ENCODE measurements at regions of chr13 and their contacts with region 1.

Region 1: DNA sequence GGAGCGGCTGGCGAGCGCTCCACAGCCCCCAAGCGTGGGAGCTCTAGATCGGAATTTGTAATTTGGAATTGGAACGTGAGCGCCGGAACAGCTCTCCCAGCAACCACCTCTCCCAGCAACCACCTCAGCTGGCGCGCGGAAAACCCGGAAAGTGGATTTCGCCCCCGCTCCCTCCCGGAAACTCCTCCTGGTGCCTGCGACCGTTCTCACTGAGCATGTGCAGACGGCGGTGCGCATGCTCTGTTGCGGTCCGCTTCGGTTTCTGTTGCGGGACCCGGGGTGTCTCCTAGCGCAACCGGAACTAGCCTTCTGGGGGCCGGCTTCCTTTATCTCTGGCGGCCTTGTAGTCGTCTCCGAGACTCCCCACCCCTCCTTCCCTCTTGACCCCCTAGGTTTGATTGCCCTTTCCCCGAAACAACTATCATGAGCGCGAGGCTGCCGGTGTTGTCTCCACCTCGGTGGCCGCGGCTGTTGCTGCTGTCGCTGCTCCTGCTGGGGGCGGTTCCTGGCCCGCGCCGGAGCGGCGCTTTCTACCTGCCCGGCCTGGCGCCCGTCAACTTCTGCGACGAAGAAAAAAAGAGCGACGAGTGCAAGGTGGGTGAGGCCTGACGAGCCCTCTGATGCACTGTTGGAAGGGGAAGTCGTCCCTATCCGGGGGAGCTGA is at the start of gene TM9SF2:
- DNase-seq: peak; percentile 93 to 99 (median 96)
- ATAC-seq: peak; percentile 60
- H3K4me3 ChIP-seq: peak within 1 kb of the TSS; percentile 85
- H3K4me3 Mint-ChIP-seq: peak within 1 kb of the TSS; percentile 96
- H3K27ac ChIP-seq: peak within 1 kb of the TSS; percentile 85 to 92
- H3K27ac Mint-ChIP-seq: peak within 1 kb of the TSS; percentile 98
- H3K4me1 ChIP-seq: peaks cover 56% of the 10 kb centered on the region
- H3K4me1 Mint-ChIP-seq: peaks cover 90% of the 10 kb centered on the region
- H3K27me3 ChIP-seq: no peaks in the 10 kb centered on the region
- H3K27me3 Mint-ChIP-seq: no peaks in the 10 kb centered on the region
- CTCF ChIP-seq: no peak
- total RNA-seq, gene TM9SF2: 37.2 to 38.2 TPM

Region 2: GRCh38 chr13:99087096-99087953 is 414.0 kb before region 1 on chr13:
- CTCF ChIA-PET with region 1: no interaction called
- POLR2A ChIA-PET with region 1: interaction called, 11 read pairs
- intact Hi-C with region 1: loop called in 1 of 2 experiments (anchors 10 kb)
- DNase-seq: peak; percentile 87 to 96 (median 93)
- ATAC-seq: peak; percentile 73
- H3K4me3 ChIP-seq: peak overlapping the region; percentile 70
- H3K4me3 Mint-ChIP-seq: peak overlapping the region; percentile 97
- H3K27ac ChIP-seq: peak overlapping the region; percentile 87 to 99
- H3K27ac Mint-ChIP-seq: peak overlapping the region; percentile 99
- H3K4me1 ChIP-seq: peaks cover 43% of the 10 kb centered on the region
- H3K4me1 Mint-ChIP-seq: peaks cover 48% of the 10 kb centered on the region
- H3K27me3 ChIP-seq: no peaks in the 10 kb centered on the region
- H3K27me3 Mint-ChIP-seq: no peaks in the 10 kb centered on the region
- CTCF ChIP-seq: peak; percentile 30

Region 3: GRCh38 chr13:99258210-99258860 is 243.0 kb before region 1 on chr13 and contains the start of gene GPR18:
- CTCF ChIA-PET with region 1: no interaction called
- POLR2A ChIA-PET with region 1: interaction called, 3 read pairs
- intact Hi-C with region 1: loop called in 1 of 2 experiments (anchors 2 kb)
- DNase-seq: peak in 6 of 14 experiments; percentile 27 to 88 (median 66)
- ATAC-seq: peak; percentile 75
- H3K4me3 ChIP-seq: peak within 1 kb of the TSS; percentile 69
- H3K4me3 Mint-ChIP-seq: peak within 1 kb of the TSS; percentile 94
- H3K27ac ChIP-seq: peak within 1 kb of the TSS; percentile 70 to 78
- H3K27ac Mint-ChIP-seq: peak within 1 kb of the TSS; percentile 92
- H3K4me1 ChIP-seq: peaks cover 22% of the 10 kb centered on the region
- H3K4me1 Mint-ChIP-seq: peaks cover 83% of the 10 kb centered on the region
- H3K27me3 ChIP-seq: no peaks in the 10 kb centered on the region
- H3K27me3 Mint-ChIP-seq: no peaks in the 10 kb centered on the region
- CTCF ChIP-seq: no peak
- total RNA-seq, gene GPR18: 42.9 to 45.1 TPM

Region 4: DNA sequence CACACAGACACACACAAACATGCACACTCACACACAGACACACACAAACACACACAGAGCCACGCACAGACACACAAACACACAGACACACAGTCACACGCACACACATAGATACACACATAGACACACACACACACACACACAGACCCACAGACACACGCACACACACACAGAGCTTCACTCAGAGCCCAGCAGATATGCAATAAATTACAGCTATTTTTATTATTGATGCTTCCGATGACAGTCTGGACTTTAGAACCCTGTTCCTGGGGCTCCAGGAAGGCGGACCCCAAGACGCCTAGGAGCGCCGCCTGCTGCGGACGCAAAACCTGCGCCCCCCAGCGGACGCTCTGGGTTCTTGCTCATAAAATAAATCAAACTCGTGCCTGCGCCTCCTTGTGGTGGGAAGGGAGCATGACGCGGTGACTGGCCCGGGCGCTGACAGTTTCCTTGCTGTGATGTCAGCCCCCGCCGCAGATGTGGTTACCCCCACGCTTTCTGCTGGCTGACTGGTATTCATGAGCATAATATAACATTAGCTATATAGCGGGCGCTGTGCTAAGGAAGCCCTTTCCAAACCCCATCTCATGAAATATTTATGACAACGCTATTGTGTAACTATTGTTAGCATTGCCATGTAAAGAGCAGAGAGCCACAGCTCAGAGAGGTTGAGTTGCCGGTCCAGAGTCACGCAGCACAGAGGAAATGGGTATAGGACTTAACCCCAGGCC is 64.5 kb before region 1 on chr13:
- CTCF ChIA-PET with region 1: interaction called, 13 read pairs
- POLR2A ChIA-PET with region 1: interaction called, 3 read pairs
- intact Hi-C with region 1: loop called (anchors 1 kb)
- DNase-seq: peak; percentile 91 to 98 (median 94)
- ATAC-seq: peak; percentile 52
- H3K4me3 ChIP-seq: peak overlapping the region; percentile 32
- H3K4me3 Mint-ChIP-seq: peak overlapping the region; percentile 47
- H3K27ac ChIP-seq: peak overlapping the region in 1 of 2 donors; percentile 11
- H3K27ac Mint-ChIP-seq: peak overlapping the region; percentile 84
- H3K4me1 ChIP-seq: peaks cover 57% of the 10 kb centered on the region
- H3K4me1 Mint-ChIP-seq: peaks cover 64% of the 10 kb centered on the region
- H3K27me3 ChIP-seq: no peaks in the 10 kb centered on the region
- H3K27me3 Mint-ChIP-seq: no peaks in the 10 kb centered on the region
- CTCF ChIP-seq: peak; percentile 100

Region 5: GRCh38 chr13:99606324-99607066 is 105.2 kb after region 1 on chr13:
- CTCF ChIA-PET with region 1: interaction called, 5 read pairs
- POLR2A ChIA-PET with region 1: interaction called, 19 read pairs
- intact Hi-C with region 1: loop called (anchors 2 kb)
- DNase-seq: peak; percentile 85 to 97 (median 92)
- ATAC-seq: peak; percentile 88
- H3K4me3 ChIP-seq: peak within 1 kb of the TSS; percentile 73
- H3K4me3 Mint-ChIP-seq: peak within 1 kb of the TSS; percentile 96
- H3K27ac ChIP-seq: peak within 1 kb of the TSS; percentile 37 to 83
- H3K27ac Mint-ChIP-seq: peak within 1 kb of the TSS; percentile 91
- H3K4me1 ChIP-seq: peaks cover 32% of the 10 kb centered on the region
- H3K4me1 Mint-ChIP-seq: peaks cover 62% of the 10 kb centered on the region
- H3K27me3 ChIP-seq: no peaks in the 10 kb centered on the region
- H3K27me3 Mint-ChIP-seq: no peaks in the 10 kb centered on the region
- CTCF ChIP-seq: peak; percentile 4

Region 6: GRCh38 chr13:100063333-100063732 is 562.0 kb after region 1 on chr13:
- CTCF ChIA-PET with region 1: no interaction called
- POLR2A ChIA-PET with region 1: no interaction called
- intact Hi-C with region 1: no loop called
- DNase-seq: no peak
- ATAC-seq: no peak
- H3K4me3 ChIP-seq: no peak overlapping the region
- H3K4me3 Mint-ChIP-seq: no peak overlapping the region
- H3K27ac ChIP-seq: no peak overlapping the region
- H3K27ac Mint-ChIP-seq: no peak overlapping the region
- H3K4me1 ChIP-seq: no peaks in the 10 kb centered on the region
- H3K4me1 Mint-ChIP-seq: no peaks in the 10 kb centered on the region
- H3K27me3 ChIP-seq: peaks cover 0 to 2% of the 10 kb centered on the region in 2 experiments
- H3K27me3 Mint-ChIP-seq: peaks cover 10% of the 10 kb centered on the region
- CTCF ChIP-seq: no peak

Measured in CD4-positive, alpha-beta T cell (primary cell).